Panc1 (cell line): ENCODE measurements at regions of chr14 and their contacts with region 1.

Region 1: DNA sequence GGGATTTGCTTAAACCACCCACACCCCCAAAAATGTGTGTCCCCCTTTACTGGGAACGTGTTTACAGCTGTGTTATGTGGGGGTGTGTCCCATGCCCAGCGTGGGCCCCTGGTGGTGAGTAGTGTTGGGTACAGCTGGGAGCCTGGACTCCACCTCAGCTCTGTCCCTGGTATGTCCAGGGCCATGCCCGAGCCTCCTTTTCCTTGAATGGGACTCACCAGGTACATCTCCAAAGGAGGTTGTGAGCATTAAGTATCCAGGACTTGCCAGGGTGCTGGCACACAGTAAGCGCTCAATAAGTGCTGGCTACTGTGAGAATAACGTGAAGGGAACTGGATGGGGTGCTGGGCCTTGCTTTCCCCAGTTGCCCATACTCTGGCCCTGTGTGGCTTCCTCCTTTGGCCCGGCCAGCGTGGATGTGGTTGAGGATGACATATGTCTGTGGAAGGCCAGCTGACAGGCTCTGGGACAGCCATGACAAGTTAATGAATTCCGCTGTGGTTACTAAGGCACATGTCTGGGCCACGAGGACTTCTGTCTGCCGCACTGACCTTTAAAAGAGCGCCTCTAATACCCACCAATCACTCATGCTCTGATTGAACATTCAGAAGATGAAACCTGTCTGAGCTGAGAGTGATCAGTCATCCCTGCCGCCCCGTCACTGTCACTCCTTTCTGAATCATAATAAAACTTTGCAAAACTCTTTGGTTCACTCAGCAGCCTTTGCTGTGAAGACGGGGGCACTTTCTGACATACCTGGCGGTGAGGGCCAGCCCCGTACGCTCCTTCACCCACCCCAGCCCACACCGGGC is 74.7 kb downstream of the DIO3 start:
- DNase-seq: no peak
- ATAC-seq: 0 out of 2 replicates have a peak, but pooled peaks have one; percentile 53
- H3K4me3 ChIP-seq: no peak overlapping the region
- H3K27ac ChIP-seq: no peak overlapping the region
- H3K4me1 ChIP-seq: no peaks in the 10 kb centered on the region
- H3K27me3 ChIP-seq: no peaks in the 10 kb centered on the region
- CTCF ChIP-seq: no peak

Region 2: DNA sequence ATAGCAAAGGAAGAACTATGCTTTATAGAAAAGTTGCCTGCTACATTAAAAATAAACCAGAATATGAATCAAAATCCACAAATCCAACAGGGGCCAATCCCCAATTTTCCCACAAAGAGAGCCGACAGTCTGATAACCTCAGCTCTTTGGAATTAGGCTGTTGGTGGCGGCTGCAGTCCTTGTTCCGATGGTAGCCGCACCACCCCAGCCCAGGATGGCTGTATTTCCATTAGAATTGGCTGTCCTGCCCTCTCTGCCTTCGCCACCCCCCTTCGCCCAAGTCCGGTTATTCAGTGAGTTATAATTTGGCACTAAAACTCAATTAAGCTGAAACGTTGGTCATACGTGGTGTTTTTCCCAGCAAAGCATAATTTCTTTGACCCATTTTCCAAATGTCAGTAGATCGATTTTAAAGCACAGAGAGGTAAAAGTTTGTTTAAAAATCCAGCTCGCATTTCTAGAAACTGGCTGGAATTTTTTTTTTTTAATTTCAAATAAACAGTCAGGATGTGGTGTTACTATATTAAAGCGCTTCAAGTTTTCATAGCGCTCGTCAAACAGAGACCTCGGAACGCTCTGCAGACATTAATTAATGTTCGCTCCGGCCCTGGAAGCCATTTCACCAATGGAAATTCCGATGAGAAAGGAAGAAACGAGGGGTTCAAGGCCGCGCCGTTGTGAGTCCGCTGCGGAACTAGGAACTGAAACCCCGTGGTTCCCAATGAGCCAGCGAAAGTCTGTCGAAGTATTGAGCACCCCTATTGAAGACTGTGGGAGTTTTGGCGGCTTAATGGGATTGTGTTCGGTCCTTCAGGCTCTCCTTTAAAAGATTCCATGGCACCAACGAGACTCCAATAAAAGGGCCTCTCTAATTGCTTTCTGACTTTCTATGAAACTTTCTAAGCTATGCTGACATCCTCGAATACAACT is 179.4 kb before region 1 on chr14:
- CTCF ChIA-PET with region 1: no interaction called
- POLR2A ChIA-PET with region 1: no interaction called
- in situ Hi-C with region 1: no loop called
- intact Hi-C with region 1: no loop called
- DNase-seq: no peak
- ATAC-seq: no peak
- H3K4me3 ChIP-seq: no peak overlapping the region
- H3K27ac ChIP-seq: no peak overlapping the region
- H3K4me1 ChIP-seq: no peaks in the 10 kb centered on the region
- H3K27me3 ChIP-seq: no peaks in the 10 kb centered on the region
- CTCF ChIP-seq: no peak

Region 3: GRCh38 chr14:101616202-101616601 is 19.8 kb before region 1 on chr14:
- CTCF ChIA-PET with region 1: no interaction called
- POLR2A ChIA-PET with region 1: no interaction called
- in situ Hi-C with region 1: no loop called
- intact Hi-C with region 1: no loop called
- DNase-seq: no peak
- ATAC-seq: no peak
- H3K4me3 ChIP-seq: no peak overlapping the region
- H3K27ac ChIP-seq: no peak overlapping the region
- H3K4me1 ChIP-seq: no peaks in the 10 kb centered on the region
- H3K27me3 ChIP-seq: no peaks in the 10 kb centered on the region; the same call in none of the 2 replicates
- CTCF ChIP-seq: no peak

Region 4: GRCh38 chr14:101781240-101782061 is 145.5 kb after region 1 on chr14:
- CTCF ChIA-PET with region 1: no interaction called
- POLR2A ChIA-PET with region 1: interaction called, 12 read pairs
- in situ Hi-C with region 1: no loop called
- intact Hi-C with region 1: no loop called
- DNase-seq: no peak
- ATAC-seq: peak; percentile 75
- H3K4me3 ChIP-seq: peak overlapping the region; percentile 38
- H3K27ac ChIP-seq: no peak overlapping the region
- H3K4me1 ChIP-seq: no peaks in the 10 kb centered on the region
- H3K27me3 ChIP-seq: no peaks in the 10 kb centered on the region
- CTCF ChIP-seq: no peak